GM10248 (cell line): ENCODE measurements at regions of chr5 and their contacts with region 1.

Region 1: GRCh38 chr5:146409054-146409671 is 38.0 kb upstream of the TCERG1 start:
- DNase-seq: no peak
- CTCF ChIP-seq: no peak

Region 2: GRCh38 chr5:146426853-146427618 is 17.9 kb after region 1 on chr5:
- CTCF ChIA-PET with region 1: interaction called, 32 read pairs
- POLR2A ChIA-PET with region 1: no interaction called
- DNase-seq: peak; percentile 59
- CTCF ChIP-seq: peak; percentile 70